Activated naive CD4-positive, alpha-beta T cell treated with anti-CD3 and anti-CD28 coated beads, Interleukin-2, amount 10 ng/mL, durations not matched to agents 7 days and 5 days (primary cell): ENCODE measurements at regions of chr20 and their contacts with region 1.

Region 1: DNA sequence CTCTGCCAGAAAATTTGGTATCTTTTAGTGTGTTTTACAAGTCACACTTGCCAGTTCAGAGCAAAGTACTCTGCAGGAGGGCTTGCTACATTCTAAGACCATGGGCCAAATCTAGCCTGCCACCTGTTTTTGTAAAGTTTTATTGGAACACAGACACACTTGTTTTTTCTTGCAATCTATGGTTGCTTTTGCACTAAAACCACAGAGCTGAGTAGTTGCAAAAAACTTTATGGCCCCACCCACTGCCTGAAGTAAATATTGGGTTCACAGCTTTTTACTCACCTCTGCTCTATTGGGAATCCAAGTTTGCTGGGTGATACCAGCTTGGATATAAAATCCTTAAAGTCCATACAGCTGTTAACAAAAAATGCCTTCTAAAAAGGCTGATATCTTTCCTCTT is 109.0 kb downstream of the ZFP64 start:
- DNase-seq: no peak
- H3K4me3 Mint-ChIP-seq: no peak overlapping the region
- H3K27ac Mint-ChIP-seq: no peak overlapping the region
- H3K4me1 Mint-ChIP-seq: peaks cover 2% of the 10 kb centered on the region
- H3K27me3 Mint-ChIP-seq: no peaks in the 10 kb centered on the region

Region 2: GRCh38 chr20:51800060-51800794 is 282.4 kb before region 1 on chr20:
- CTCF ChIA-PET with region 1: interaction called, 15 read pairs
- DNase-seq: peak; percentile 66
- H3K4me3 Mint-ChIP-seq: no peak overlapping the region
- H3K27ac Mint-ChIP-seq: peak overlapping the region; percentile 49
- H3K4me1 Mint-ChIP-seq: peaks cover 3% of the 10 kb centered on the region
- H3K27me3 Mint-ChIP-seq: peaks cover 67% of the 10 kb centered on the region